AG04449 (cell line): ENCODE measurements at regions of chr6 and their contacts with region 1.

Region 1: GRCh38 chr6:28884423-28885131 is 39.2 kb downstream of the TRIM27 start:
- DNase-seq: no peak
- H3K4me3 ChIP-seq: no peak overlapping the region
- CTCF ChIP-seq: no peak

Region 2: DNA sequence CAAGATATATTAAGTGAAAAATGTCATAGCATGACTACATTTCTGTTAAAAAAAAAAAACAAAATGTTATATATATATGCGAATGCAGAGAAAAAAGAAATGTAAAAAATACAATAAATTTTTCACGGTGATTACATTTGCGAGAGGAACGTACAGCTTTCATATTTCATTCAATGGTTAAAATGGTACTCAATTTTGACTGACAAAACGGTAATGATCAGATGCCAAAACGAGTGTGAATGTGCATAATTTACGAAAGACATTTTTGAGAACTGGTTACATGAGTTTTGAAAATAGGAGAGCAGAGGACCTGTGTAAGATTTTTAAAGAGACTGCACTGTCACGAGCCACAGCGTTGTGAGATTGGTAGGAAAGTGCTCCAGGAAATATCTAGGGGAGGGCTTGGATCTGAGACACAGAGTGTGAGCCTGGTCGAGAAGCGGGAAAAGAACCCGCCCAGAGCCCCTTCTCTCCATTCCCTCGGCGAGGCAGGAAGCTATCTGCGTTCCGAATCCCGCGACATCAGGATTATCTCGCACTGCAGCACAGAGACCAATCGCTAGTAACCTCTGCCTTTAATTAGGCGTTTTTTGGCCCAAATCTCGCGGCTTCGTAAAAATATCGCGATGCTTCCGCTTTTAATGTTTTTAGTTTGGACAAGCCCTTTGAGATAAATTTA is 10.7 kb after region 1 on chr6:
- CTCF ChIA-PET with region 1: no interaction called
- POLR2A ChIA-PET with region 1: interaction called, 13 read pairs
- DNase-seq: peak; percentile 75
- H3K4me3 ChIP-seq: peak overlapping the region; percentile 77
- CTCF ChIP-seq: no peak